ENCODE measurements at regions of chr10 and their contacts with region 1.

Region 1: GRCh38 chr10:129963641-129964501 is at the start of gene EBF3:
- DNase-seq: peak; percentile 88 to 94 (median 91)
- ATAC-seq: peak; percentile 83 to 87 (median 83)
- H3K4me3 ChIP-seq: peak within 1 kb of the TSS; percentile 63 to 93 (median 73)
- H3K27ac ChIP-seq: peak within 1 kb of the TSS; percentile 79 to 94 (median 90)
- H3K4me1 ChIP-seq: peaks cover 0 to 53% (median 8%) of the 10 kb centered on the region in 12 donors
- H3K27me3 ChIP-seq: peaks cover 16 to 98% (median 56%) of the 10 kb centered on the region in 9 donors
- CTCF ChIP-seq: peak in 1 of 12 donors; percentile 8
- POLR2A ChIP-seq: peak; percentile 67 to 98
- total RNA-seq, gene EBF3: 3.6 to 8.8 (median 7.2) TPM

Region 2: DNA sequence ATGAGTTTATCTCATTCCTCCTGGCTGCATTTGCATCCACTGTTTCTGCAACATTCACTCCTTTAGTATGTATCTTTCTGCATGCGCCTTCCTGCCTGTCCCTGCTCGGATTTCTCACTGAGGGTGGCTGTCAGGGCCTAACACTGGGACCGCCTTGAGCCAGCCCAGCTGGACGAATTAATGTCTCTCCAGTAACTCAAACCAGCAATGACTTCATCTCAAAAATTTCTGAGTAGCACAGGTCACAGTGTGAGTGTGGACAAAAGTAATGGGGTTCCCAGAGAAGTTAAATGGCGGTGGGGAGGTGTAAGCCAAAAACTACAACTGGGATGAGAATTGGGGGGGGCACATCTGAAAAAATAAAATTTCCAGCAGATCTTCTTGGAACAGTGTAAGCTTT is 940.8 kb before region 1 on chr10:
- intact Hi-C with region 1: loop called in 1 of 10 experiments (anchors 5 kb)
- DNase-seq: peak; percentile 71 to 89 (median 75)
- ATAC-seq: peak; percentile 60 to 90 (median 84)
- H3K4me3 ChIP-seq: peak overlapping the region in 1 of 12 donors; percentile 29
- H3K27ac ChIP-seq: peak overlapping the region in 4 of 12 donors; percentile 4 to 67 (median 50)
- H3K4me1 ChIP-seq: peaks cover 0 to 31% (median 1%) of the 10 kb centered on the region in 12 donors
- H3K27me3 ChIP-seq: peaks cover 0 to 28% (median 0%) of the 10 kb centered on the region in 9 donors
- CTCF ChIP-seq: no peak
- POLR2A ChIP-seq: no peak

Region 3: DNA sequence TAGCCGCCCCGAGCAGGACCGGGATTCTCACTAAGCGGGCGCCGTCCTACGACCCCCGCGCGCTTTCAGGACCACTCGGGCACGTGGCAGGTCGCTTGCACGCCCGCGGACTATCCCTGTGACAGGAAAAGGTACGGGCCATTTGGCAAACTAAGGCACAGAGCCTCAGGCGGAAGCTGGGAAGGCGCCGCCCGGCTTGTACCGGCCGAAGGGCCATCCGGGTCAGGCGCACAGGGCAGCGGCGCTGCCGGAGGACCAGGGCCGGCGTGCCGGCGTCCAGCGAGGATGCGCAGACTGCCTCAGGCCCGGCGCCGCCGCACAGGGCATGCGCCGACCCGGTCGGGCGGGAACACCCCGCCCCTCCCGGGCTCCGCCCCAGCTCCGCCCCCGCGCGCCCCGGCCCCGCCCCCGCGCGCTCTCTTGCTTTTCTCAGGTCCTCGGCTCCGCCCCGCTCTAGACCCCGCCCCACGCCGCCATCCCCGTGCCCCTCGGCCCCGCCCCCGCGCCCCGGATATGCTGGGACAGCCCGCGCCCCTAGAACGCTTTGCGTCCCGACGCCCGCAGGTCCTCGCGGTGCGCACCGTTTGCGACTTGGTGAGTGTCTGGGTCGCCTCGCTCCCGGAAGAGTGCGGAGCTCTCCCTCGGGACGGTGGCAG is 497.0 kb before region 1 on chr10 and contains the start of gene MGMT:
- intact Hi-C with region 1: loop called in 3 of 10 experiments (anchors 10 kb)
- DNase-seq: peak; percentile 94 to 98 (median 96)
- ATAC-seq: peak; percentile 93 to 99 (median 98)
- H3K4me3 ChIP-seq: peak within 1 kb of the TSS; percentile 66 to 91 (median 82)
- H3K27ac ChIP-seq: peak within 1 kb of the TSS; percentile 26 to 93 (median 86)
- H3K4me1 ChIP-seq: peaks cover 0 to 18% (median 11%) of the 10 kb centered on the region in 12 donors
- H3K27me3 ChIP-seq: no peaks in the 10 kb centered on the region
- CTCF ChIP-seq: no peak
- POLR2A ChIP-seq: peak in 1 of 2 donors; percentile 81
- total RNA-seq, gene MGMT: 6.2 to 25.3 (median 14.8) TPM

Region 4: DNA sequence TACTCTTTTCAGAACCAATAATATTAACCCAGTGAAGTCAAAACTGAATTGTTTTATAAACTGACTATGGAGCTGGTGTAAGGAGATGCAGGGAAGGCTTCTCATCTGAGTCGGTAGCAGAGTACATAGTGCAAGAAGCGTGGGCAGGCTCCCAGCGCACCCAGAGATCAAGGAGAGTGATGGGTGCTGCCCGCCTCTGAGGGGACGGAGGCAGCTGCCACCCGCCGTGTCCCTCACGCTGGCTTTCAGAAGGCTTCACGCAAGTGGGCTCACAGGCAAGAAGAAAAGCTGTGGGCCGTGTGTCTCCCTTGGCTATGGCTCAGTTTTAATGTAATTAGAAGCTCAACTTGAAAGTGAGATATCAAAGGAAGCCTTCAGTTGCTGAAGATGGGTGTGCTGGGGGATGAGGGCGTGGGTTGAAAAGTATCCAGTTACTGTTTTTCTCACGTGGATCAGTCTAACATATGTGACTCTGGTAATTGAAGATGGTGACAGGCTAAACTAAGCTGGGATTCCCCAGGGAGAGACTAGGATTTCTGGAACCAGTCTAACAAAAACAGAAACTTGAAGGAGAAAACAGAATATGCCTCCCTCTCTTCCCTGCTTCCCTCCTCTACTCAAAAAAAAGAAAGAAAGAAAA is 337.0 kb before region 1 on chr10:
- intact Hi-C with region 1: loop called in 1 of 10 experiments (anchors 10 kb)
- DNase-seq: no peak
- ATAC-seq: peak in 3 of 4 donors; percentile 42 to 50 (median 42)
- H3K4me3 ChIP-seq: peak overlapping the region in 4 of 12 donors; percentile 4 to 11 (median 8)
- H3K27ac ChIP-seq: peak overlapping the region in 7 of 12 donors; percentile 11 to 59 (median 28)
- H3K4me1 ChIP-seq: peaks cover 0 to 28% (median 16%) of the 10 kb centered on the region in 12 donors
- H3K27me3 ChIP-seq: no peaks in the 10 kb centered on the region
- CTCF ChIP-seq: no peak
- POLR2A ChIP-seq: no peak

Region 5: GRCh38 chr10:129853562-129853903 is 110.3 kb before region 1 on chr10:
- intact Hi-C with region 1: loop called in 1 of 10 experiments (anchors 10 kb)
- DNase-seq: no peak
- ATAC-seq: no peak
- H3K4me3 ChIP-seq: peak overlapping the region in 2 of 12 donors; percentile 3 to 9
- H3K27ac ChIP-seq: peak overlapping the region in 1 of 12 donors; percentile 2
- H3K4me1 ChIP-seq: peaks cover 0 to 5% (median 0%) of the 10 kb centered on the region in 12 donors
- H3K27me3 ChIP-seq: peaks cover 0 to 3% (median 0%) of the 10 kb centered on the region in 9 donors
- CTCF ChIP-seq: peak in 11 of 12 donors; percentile 23 to 55 (median 35)
- POLR2A ChIP-seq: no peak

Region 6: DNA sequence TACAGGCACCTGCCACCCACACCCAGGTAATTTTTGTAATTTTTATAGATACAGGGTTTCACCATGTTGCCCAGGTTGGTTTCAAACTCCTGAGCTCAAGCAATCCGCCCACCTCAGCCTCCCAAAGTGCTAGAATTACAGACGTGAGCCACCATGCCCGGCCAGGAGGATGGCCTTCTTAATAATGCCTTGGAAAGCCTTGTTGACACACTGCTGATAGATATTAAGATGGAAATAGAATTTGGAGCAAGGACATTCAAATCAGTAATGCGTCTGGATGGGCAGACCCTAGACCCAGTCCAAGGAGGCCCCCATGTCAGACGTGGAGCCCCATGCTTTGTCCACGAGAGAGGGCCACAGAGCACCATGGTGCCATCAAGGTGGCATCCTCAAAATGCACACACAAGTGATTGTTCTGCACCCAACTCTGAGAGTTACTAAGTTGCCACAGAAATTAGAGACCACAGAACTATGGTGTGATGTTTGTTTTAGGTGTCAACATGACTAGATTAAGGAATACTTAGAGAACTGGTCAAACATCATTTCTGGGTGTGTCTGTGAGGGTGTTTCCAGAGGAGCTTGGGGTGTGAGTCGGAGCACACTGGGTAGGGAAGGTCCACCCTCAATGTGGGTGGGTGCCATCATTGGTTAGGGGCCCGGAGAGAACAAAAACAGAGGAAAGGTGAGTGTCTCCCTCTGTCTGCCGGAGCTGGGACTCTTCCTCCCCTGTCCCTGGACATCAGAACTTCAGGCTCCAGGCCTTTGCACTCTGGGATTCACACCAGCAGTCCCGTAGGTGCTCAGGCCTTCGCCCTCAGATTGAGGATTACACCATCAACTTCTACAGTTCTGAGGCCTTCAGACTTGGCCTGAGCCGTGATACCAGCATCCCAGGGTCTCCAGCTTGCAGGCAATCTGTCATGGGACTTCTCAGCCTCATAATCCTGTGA is 34.3 kb before region 1 on chr10:
- intact Hi-C with region 1: no loop called
- DNase-seq: peak in 2 of 5 donors; percentile 6 to 17
- ATAC-seq: no peak
- H3K4me3 ChIP-seq: no peak overlapping the region
- H3K27ac ChIP-seq: no peak overlapping the region
- H3K4me1 ChIP-seq: peaks cover 0 to 15% (median 0%) of the 10 kb centered on the region in 12 donors
- H3K27me3 ChIP-seq: no peaks in the 10 kb centered on the region
- CTCF ChIP-seq: peak in 2 of 12 donors; percentile 18 to 26
- POLR2A ChIP-seq: no peak

Region 7: DNA sequence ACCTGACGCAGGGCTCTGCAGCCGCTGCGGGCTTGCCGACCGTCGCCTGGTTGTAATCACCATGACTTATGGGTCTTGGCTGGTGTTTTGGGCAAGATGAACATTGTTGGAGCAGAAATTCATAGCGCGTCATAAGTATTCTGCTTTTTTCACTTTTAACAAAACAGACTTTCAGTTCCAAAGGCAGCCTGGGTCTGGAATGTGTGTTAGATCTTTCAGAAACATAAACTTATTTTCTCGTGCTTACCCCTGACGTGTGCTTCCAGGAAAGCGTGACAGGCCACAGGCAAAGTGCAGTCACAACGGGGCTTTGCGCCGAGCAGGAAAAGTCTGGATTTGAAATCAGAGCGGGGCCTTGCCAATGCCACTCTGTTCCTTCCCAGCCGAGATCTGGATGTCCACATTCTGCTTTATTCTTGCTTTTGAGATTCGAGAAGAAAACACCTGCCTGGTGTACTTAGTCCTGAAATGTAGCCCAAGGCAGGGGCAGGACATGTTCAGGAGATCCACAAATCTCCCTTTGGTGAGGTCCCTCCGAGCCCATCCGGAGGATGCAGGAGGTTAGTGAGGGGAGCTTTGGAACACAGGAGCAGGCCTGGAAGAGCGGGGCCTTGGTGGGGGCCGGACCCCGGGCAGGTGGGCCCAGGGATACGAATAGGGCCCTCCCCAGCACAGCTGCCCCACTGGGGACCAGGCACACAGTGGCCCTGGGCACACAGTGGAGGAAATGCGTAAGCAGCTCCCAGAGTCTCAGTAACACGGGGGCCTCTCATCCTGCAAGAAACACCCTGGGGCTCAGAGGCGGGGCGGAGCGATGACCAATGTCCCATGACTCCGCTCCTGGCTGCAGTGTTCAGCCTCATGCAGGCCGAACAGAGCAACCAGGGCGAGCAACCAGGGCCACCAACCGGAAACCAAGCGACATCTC is 49.7 kb after region 1 on chr10:
- intact Hi-C with region 1: no loop called
- DNase-seq: no peak
- ATAC-seq: no peak
- H3K4me3 ChIP-seq: no peak overlapping the region
- H3K27ac ChIP-seq: no peak overlapping the region
- H3K4me1 ChIP-seq: no peaks in the 10 kb centered on the region
- H3K27me3 ChIP-seq: peaks cover 0 to 20% (median 0%) of the 10 kb centered on the region in 9 donors
- CTCF ChIP-seq: no peak
- POLR2A ChIP-seq: no peak

Measured in heart left ventricle (tissue), 16 donors.